ENCODE measurements at regions of chr13 and their contacts with region 1.

Region 1: GRCh38 chr13:21913010-21913409 is 242.1 kb downstream of the FGF9 start:
- DNase-seq: peak; percentile 12
- ATAC-seq: peak; percentile 82
- H3K4me3 ChIP-seq: no peak overlapping the region
- H3K27ac ChIP-seq: no peak overlapping the region
- H3K4me1 ChIP-seq: no peaks in the 10 kb centered on the region
- H3K27me3 ChIP-seq: no peaks in the 10 kb centered on the region
- CTCF ChIP-seq: peak; percentile 15 to 59 (median 53); a peak in 5 of 6 replicates
- POLR2A ChIP-seq: no peak
- RAD21 ChIP-seq: peak; percentile 44; the same call in 1 of the 2 replicates

Region 2: DNA sequence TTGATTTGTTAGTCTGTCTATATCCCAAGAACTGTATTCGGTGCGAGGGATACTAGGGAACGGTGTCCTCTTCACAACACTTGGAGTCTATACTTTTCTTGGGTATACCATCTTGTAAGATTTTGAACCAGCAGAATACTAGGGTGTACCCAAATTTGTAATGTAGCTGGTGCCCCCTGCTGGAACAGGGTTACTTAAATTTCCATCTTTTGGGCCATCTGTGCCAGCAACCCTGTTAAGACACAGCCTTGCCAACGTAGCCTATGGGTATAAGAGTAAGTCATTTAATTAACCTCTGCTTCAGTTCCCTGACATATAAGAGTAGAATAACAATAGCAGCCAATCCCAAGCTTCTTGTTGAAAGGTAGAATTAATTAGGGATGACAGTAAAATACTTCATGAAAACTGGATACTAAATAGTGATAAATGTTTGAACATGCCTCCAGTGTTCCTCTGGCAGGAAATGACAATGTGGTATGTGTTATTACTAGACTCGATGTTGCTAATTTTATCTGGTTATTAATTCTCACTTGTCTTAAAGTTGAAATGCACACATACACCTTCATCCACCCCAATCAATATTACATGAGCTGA is 365.4 kb after region 1 on chr13:
- CTCF ChIA-PET with region 1: interaction called, 3 read pairs
- POLR2A ChIA-PET with region 1: no interaction called
- RAD21 ChIA-PET with region 1: no interaction called
- intact Hi-C with region 1: loop called (anchors 1 kb)
- DNase-seq: peak; percentile 34
- ATAC-seq: peak; percentile 78
- H3K4me3 ChIP-seq: no peak overlapping the region
- H3K27ac ChIP-seq: no peak overlapping the region
- H3K4me1 ChIP-seq: no peaks in the 10 kb centered on the region
- H3K27me3 ChIP-seq: no peaks in the 10 kb centered on the region
- CTCF ChIP-seq: peak; percentile 31 to 54 (median 43); a peak in 4 of 6 replicates
- POLR2A ChIP-seq: no peak
- RAD21 ChIP-seq: peak; percentile 56

Measured in HCT116 (cell line).